ENCODE measurements at regions of chr4 and their contacts with region 1.

Region 1: DNA sequence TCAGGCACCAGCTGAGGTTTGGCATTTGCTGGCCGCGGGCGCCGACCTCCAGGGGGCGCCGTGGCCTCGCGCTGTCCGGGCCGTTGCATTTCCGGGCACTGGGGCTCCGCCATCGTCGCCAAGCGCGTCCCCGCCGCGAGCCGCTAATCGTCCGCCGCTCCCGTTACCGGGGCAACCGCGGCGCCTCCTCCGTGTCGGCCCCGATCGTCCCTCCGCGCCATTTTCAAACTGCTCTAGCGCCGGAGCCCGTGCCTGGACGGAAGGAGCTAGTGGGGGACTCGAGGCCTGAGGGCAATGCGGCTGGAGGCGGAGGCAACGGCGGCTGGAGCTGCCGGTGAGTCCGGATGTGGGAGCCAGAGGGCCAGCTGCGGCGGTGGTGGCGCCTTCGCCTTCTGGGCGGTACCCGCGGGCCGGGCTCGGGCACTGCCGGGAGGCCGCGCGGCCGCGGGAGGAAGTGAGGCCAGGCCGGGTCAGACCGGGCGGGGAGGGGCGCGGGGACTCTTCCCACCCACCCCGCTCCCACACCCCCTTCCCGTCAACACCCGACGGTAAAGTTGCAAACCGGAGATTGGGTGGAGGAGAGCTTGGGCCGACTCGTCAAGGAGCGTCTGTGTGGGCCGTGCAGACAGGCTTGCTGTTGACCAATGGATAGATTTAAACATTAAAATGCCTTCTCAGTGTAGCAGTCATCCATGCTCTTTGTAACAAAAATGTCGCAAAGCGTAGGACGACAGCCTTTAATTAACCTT is at the start of gene CEP135:
- DNase-seq: peak; percentile 92
- H3K4me3 Mint-ChIP-seq: peak within 1 kb of the TSS; percentile 77
- H3K27ac Mint-ChIP-seq: peak within 1 kb of the TSS; percentile 97
- H3K4me1 Mint-ChIP-seq: peaks cover 43% of the 10 kb centered on the region
- H3K27me3 Mint-ChIP-seq: no peaks in the 10 kb centered on the region
- total RNA-seq, gene CEP135: 19.1 to 22.7 TPM

Region 2: GRCh38 chr4:55931833-55932232 is 17.1 kb before region 1 on chr4:
- CTCF ChIA-PET with region 1: interaction called, 30 read pairs
- POLR2A ChIA-PET with region 1: no interaction called
- DNase-seq: no peak
- H3K4me3 Mint-ChIP-seq: no peak overlapping the region
- H3K27ac Mint-ChIP-seq: no peak overlapping the region
- H3K4me1 Mint-ChIP-seq: no peaks in the 10 kb centered on the region
- H3K27me3 Mint-ChIP-seq: peaks cover 5% of the 10 kb centered on the region

Region 3: GRCh38 chr4:55959655-55960054 is 10.8 kb after region 1 on chr4:
- CTCF ChIA-PET with region 1: interaction called, 43 read pairs
- POLR2A ChIA-PET with region 1: no interaction called
- DNase-seq: no peak
- H3K4me3 Mint-ChIP-seq: no peak overlapping the region
- H3K27ac Mint-ChIP-seq: no peak overlapping the region
- H3K4me1 Mint-ChIP-seq: no peaks in the 10 kb centered on the region
- H3K27me3 Mint-ChIP-seq: no peaks in the 10 kb centered on the region

Region 4: DNA sequence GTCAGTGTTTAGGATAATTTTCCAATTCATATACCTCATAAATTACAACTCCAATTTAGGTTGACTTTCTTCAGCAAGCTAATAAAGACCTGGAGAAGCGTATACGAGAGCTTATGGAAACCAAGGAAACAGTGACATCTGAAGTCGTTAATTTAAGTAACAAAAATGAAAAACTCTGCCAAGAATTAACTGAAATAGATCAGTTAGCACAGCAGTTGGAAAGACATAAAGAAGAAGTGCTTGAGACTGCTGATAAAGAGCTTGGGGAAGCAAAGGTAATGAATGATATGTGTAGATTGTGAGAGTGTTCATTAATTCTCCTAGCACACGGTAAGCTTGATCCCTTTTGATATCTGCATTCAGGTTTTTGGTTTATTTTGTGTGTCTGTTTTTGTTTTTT is 16.7 kb after region 1 on chr4:
- CTCF ChIA-PET with region 1: interaction called, 43 read pairs
- POLR2A ChIA-PET with region 1: no interaction called
- DNase-seq: no peak
- H3K4me3 Mint-ChIP-seq: no peak overlapping the region
- H3K27ac Mint-ChIP-seq: no peak overlapping the region
- H3K4me1 Mint-ChIP-seq: no peaks in the 10 kb centered on the region
- H3K27me3 Mint-ChIP-seq: no peaks in the 10 kb centered on the region

Region 5: DNA sequence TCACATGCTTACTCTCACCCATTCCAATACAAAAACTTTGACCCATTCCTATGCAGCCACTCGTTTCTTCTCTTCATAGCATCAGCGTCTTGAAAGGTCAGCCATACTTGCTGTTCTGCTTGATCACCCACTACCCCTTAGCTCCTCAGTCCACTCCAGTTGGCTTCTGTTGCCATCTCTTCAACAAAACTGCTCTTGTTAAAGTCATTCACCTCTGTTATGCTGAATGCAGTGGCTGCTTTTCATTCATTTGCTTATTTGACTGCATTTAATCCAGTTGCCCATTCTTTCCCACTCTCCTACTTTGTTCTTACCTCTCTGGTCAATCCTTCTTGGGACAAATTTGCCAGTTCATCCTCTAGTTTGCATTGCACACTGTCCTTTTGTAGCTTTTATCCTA is 24.8 kb after region 1 on chr4:
- CTCF ChIA-PET with region 1: interaction called, 11 read pairs
- POLR2A ChIA-PET with region 1: no interaction called
- DNase-seq: no peak
- H3K4me3 Mint-ChIP-seq: no peak overlapping the region
- H3K27ac Mint-ChIP-seq: no peak overlapping the region
- H3K4me1 Mint-ChIP-seq: no peaks in the 10 kb centered on the region
- H3K27me3 Mint-ChIP-seq: no peaks in the 10 kb centered on the region